Activated T-helper 1 cell treated with anti-CD3 and anti-CD28 coated beads, Interleukin-12 subunit alpha, Interleukin-12 subunit beta, Interleukin-2, Interleukin-4 antibody, amounts not matched to agents 30 ng/mL and 10 ng/mL and 1 ng/mL, durations not matched to agents 14 hours and 24 hours and 36 hours (primary cell): ENCODE measurements at regions of chr18 and their contacts with region 1.

Region 1: DNA sequence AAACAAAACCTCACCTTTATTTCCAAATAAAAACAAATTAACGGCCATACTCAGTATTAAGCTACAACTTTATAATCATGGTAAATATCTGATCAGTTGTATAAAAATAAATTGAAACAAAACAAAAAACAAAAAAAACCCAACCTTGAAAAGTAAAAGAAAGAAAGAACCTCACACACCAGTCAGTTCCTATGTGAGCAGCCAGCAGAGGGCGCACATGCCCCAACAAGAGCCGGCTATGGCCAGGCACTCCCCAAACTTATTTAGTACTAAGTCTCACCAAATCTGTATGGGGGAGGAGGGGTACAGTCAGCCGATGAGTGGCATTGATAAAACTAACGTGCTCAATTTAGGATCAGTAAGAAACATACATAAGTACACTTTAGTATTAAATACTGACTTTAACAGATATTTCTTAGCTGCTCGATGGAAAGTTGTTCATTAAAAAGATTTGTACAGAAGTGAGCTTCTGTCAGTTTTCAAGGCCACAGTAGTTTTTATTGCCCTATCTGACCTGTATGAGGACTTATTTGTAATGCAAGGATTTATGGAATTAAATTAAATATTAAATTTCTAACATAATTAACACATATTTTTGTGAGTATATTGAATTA is 172.6 kb downstream of the TCF4 start:
- DNase-seq: peak; percentile 48
- H3K4me3 Mint-ChIP-seq: no peak overlapping the region
- H3K27ac Mint-ChIP-seq: no peak overlapping the region
- H3K4me1 Mint-ChIP-seq: no peaks in the 10 kb centered on the region
- H3K27me3 Mint-ChIP-seq: peaks cover 1% of the 10 kb centered on the region

Region 2: GRCh38 chr18:55234366-55235093 is 180.8 kb before region 1 on chr18:
- intact Hi-C with region 1: loop called (anchors 2 kb)
- DNase-seq: peak; percentile 41
- H3K4me3 Mint-ChIP-seq: no peak overlapping the region
- H3K27ac Mint-ChIP-seq: no peak overlapping the region
- H3K4me1 Mint-ChIP-seq: peaks cover 5% of the 10 kb centered on the region
- H3K27me3 Mint-ChIP-seq: no peaks in the 10 kb centered on the region

Region 3: DNA sequence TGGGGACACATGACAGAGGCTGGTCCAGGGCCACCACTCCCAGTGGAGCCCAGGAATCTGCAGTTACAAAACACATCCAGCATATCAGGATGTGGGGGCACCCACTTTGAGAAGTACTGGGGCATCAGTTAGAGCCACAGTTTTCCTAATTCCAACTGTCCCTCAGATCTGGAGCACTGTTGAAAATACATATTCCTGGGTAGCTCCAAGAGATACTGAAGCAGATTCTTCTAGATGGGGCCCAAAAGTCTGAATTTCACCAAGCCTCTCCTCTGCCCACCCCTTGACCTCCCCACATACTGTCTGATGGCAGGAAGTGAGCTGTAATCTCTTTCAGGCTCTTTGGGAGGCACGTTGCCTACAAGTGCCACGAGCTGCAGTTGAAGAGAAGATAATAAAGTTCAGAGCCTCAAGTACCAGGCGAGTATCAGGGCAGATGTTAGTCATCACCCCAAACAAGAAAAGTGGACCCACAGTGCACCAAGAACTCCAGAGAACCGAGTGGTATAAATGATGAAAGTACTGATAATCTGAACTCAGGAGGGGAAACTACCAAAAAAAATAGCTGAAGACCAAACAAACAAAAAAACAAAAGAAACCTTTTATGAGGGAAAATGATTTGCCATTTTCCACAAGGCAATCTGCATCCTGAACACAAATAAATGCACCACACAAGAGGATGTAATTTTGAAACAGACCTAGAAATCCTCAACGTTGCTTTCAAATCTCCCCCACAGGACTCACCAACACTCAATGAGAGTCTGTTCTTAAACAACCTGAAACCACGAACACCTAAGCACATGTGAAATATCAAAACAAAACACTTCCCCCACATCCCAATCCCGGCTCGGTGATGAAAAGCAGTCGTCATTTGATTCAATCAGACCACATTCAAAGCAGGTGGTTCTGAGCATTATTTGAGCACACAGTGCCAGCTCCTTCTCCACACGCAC is 73.9 kb after region 1 on chr18:
- intact Hi-C with region 1: loop called (anchors 5 kb)
- DNase-seq: no peak
- H3K4me3 Mint-ChIP-seq: no peak overlapping the region
- H3K27ac Mint-ChIP-seq: peak overlapping the region; percentile 41
- H3K4me1 Mint-ChIP-seq: peaks cover 9% of the 10 kb centered on the region
- H3K27me3 Mint-ChIP-seq: peaks cover 23% of the 10 kb centered on the region

Region 4: DNA sequence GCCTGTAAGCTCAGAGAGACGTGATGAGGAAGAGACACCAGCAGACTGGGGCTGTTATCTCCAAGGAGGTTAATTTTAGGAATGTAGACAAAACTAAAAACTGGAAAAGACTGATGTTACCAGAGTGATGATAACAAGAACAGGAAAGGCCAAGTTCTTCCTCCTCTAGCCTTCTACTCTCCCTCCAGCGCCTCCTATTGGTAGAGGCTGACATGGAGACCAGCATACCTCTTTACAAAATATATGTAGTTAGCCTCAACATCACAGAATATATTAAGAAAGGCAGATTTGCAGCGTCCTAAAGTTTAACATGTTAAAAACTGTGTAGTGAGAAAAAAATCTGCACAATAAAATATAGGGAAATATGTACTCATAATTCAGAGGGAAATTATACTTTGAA is 106.6 kb after region 1 on chr18:
- intact Hi-C with region 1: loop called (anchors 5 kb)
- DNase-seq: no peak
- H3K4me3 Mint-ChIP-seq: no peak overlapping the region
- H3K27ac Mint-ChIP-seq: no peak overlapping the region
- H3K4me1 Mint-ChIP-seq: no peaks in the 10 kb centered on the region
- H3K27me3 Mint-ChIP-seq: peaks cover 5% of the 10 kb centered on the region

Region 5: DNA sequence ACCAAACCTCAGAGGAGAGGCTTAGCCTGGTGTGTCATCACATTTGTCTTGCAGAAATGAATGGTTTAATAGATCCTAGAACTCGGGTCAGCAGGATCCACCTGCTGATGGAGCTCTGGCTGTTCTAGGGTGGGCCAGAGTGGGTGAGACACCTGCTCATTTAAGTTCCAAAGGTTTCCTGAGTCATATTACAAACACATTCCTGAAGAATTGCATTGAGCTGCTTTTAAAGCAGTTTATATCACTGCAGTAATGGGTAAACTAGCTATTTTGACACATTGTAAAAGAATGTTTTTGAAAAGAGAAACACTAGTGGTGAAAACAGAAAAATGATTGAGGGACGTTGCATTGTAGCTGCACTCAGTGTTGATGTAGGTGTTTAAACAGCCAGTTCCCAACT is 347.9 kb after region 1 on chr18:
- intact Hi-C with region 1: loop called (anchors 10 kb)
- DNase-seq: no peak
- H3K4me3 Mint-ChIP-seq: no peak overlapping the region
- H3K27ac Mint-ChIP-seq: no peak overlapping the region
- H3K4me1 Mint-ChIP-seq: no peaks in the 10 kb centered on the region
- H3K27me3 Mint-ChIP-seq: no peaks in the 10 kb centered on the region

Region 6: DNA sequence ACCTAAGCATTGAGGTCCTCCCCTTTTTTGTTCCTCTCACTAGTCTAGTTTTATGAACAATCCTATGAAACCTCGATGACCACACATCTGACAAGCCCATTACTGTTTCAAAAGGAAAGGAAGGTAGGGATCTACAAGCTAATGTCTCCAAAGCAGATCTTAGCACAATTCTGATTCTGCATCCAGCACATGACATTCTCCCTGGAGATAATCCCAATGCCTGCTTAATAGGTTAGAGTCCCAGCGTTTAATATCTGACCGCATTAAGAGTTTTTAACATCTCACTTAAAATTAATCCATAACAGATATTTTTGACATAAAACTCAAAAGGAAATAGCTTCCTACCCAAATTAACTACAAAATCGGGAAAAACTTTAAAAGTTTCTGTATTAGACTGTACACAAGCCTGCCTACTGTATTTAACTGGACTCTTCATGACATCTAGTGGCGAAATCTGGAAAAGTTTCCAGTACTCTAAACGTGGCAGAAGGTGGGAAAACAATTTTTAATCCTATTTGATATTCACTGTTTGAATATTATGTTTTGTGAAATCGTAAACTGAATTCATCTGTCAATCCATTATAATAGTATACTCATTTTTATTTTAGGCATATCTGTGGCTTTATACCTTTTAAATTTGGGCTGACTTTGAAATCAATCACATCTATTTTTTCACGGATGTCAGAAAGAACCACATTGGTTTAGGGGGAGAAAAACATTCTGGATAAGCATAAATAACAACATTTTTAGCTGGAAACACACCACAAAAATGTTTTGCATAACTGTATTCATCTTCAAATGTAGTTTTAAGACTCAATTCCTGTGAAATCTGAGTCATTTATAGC is 1160.7 kb after region 1 on chr18:
- intact Hi-C with region 1: loop called (anchors 1 kb)
- DNase-seq: no peak
- H3K4me3 Mint-ChIP-seq: no peak overlapping the region
- H3K27ac Mint-ChIP-seq: no peak overlapping the region
- H3K4me1 Mint-ChIP-seq: no peaks in the 10 kb centered on the region
- H3K27me3 Mint-ChIP-seq: peaks cover 11% of the 10 kb centered on the region